ENCODE measurements at regions of chr9 and their contacts with region 1.

Region 1: GRCh38 chr9:135971892-135972291 is 10.7 kb upstream of the UBAC1 start:
- DNase-seq: no peak
- H3K4me3 ChIP-seq: no peak overlapping the region
- H3K27me3 ChIP-seq: peaks cover 3% of the 10 kb centered on the region; the same call in 1 of the 2 replicates
- CTCF ChIP-seq: no peak

Region 2: DNA sequence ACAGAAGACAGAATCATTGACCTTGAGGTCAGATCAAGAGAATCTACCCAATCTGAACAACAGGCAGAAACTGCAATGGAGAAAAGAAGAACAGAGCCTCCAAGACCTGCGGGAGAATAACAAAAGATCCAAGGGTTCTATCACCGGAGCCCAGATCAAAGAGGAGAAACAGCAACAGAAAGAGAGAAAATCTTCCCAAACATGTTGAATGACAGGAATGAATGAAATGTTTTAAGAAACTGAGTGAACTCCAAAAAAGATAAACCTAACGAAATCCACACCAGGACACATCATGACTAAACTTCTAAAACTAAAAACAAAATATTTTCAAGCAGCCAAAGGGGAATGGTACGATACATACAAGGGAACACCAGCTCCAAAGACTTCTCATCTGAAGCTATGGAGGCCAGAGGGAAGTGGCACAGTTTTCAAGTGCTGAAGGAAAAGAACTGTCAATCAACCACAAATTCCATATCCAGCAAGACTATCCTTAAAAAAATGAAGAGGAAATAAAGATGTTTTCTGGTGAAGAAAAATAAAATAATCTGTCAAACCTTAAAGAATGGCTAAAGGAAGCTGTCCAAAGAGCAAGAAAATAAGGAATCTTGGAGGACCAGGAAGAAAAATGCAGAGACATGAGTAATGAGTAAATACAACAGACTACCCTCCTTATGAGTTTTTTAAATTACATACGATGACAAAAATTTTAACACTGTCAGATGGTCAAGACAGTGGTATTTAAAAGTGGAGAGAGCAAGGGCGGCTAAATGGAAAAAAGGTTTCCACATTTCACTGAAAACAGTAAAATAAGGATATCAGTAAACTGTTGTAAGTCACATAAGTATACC is 76.7 kb before region 1 on chr9:
- CTCF ChIA-PET with region 1: no interaction called
- POLR2A ChIA-PET with region 1: no interaction called
- DNase-seq: no peak
- H3K4me3 ChIP-seq: no peak overlapping the region
- H3K27me3 ChIP-seq: no peaks in the 10 kb centered on the region
- CTCF ChIP-seq: no peak

Region 3: GRCh38 chr9:135992486-135993408 is 20.9 kb after region 1 on chr9:
- CTCF ChIA-PET with region 1: interaction called, 17 read pairs
- POLR2A ChIA-PET with region 1: no interaction called
- DNase-seq: peak; percentile 19
- H3K4me3 ChIP-seq: peak overlapping the region; percentile 18
- H3K27me3 ChIP-seq: peaks cover 3% of the 10 kb centered on the region; the same call in 1 of the 2 replicates
- CTCF ChIP-seq: 0 out of 2 replicates have a peak, but pooled peaks have one; percentile 9

Region 4: DNA sequence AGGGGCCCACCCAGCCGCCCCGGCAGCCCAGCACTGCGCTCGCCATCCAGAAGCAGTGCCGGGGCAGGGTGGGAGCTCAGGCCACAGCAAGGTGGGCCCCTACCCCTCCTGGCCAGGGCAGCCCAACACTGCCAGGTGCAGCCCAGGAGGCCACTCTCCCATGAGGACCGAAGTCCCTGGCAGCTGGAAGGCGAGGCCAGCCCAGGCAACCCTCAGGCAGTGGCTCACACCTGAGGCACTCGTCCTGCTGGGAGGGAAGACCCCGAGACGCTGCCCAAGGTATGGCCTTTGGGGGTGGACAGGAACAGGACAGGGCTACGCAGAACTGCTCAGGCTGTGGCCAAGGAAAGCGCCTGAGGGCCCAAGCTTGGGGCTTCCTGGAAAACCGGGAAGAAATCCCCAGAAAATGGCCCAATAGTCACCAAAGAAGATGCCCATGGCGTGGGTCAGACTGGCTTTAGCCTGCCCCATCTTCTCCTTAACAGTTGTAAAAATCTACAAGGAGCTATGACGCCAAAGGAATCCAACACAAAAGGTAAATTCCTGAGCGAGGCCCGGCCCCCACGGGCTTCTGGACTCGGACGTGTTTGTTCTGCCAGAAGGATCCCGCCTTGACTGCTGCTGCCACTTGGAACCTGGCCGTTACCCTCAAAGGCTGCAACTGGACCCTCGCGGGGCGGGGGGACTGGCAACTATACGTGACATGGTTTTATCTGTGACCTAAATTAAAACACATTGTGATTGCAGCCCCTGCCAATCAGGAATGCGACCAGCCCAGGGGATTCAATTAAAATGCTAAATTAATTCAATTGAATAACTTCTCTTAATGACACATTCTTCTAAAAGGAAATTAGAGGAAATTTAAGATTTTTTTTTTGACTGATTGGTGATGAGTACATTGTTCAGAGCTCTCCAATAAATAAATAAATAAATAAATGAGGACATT is 43.7 kb after region 1 on chr9:
- CTCF ChIA-PET with region 1: no interaction called
- POLR2A ChIA-PET with region 1: no interaction called
- DNase-seq: no peak
- H3K4me3 ChIP-seq: no peak overlapping the region
- H3K27me3 ChIP-seq: no peaks in the 10 kb centered on the region
- CTCF ChIP-seq: no peak

Region 5: DNA sequence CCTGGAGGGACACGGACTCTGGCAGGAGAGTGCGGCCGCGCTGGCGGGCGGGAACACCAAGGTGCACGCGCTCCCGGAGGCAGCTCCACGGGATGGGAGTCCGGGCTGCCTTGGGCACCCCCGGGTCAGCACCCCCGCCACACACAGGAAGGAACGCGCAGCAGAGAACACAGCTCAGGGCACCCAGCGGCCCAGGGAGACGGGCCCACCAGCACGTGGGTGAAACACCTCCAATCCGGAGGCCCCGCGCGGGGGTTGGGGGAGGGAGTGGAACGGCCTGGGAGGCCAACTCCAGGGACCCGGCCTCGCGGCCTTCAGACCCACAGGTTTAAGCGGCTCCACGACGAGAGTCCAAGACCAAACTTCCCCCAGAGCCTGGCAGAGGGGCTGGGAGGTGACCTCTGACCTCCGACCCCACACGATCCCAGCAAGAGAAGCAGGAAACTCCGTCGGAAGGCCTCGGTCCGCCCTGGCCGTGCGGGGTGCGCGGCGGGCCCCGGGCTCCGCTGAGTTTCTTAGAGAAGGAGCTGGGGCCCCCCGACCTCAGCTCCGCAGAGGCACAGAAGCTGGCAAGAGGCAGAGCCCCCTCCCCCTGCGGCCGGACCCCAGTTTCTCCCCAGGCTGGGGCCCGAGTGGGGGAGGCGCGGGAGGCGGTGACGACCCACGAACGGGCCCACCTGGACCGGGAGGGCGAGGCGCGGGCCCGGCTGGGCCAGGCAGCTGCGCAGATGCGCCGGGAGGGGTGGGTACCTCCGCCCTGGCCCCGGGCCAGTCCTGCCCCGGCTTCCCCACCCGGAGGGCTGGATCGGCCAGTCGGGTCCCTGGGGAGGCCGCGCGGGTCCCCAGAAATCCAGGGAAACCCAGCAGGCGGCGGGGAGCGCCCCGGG is 122.3 kb after region 1 on chr9:
- CTCF ChIA-PET with region 1: interaction called, 29 read pairs
- POLR2A ChIA-PET with region 1: no interaction called
- DNase-seq: no peak
- H3K4me3 ChIP-seq: peak overlapping the region; percentile 68
- H3K27me3 ChIP-seq: no peaks in the 10 kb centered on the region
- CTCF ChIP-seq: no peak

Region 6: DNA sequence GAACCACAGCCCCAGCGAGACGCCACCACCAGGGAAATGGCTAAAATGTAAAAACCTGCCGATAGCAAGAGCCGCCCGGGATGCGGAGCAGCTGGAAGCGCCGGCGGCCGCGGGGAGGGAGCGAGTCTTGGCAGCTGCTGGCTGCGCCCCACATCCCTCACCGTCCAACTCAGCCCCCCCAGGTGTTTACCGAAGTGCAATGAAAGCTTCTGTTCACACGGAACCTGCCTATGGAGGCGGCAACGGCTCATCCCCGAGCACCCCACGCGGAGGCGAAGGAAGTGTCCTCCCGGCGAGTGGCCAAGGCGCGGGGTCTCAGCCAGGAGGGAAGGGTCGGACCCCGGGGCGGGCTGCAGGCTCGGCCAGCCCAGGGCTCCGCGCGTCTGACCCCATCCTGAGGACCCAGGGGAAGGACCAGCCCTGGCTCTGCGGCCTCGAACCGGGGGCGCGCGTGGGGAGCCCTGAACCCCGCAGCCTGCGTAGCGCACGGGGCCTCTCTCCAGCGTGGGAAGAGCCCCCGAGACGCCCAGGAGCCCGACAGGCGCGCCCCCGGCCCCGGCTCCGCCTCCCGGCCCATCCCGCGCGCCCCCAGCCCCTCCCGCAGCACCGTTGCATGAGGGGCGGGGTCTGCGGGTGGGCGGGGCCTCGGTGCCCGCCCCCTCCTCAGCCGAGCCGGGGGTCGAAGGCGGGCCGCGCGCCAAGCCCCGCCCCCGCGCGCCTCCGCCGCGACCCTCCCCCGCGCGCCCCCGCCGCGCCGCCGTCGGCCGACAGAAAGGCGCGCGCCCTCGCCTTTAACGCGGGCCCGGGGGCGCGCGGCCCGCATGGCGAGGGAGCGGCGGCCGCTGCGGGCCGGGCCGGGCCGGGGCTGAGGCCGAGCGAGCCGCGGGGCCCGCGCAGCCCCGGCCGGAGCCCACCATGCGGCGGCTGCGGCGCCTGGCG is 740.1 kb after region 1 on chr9 and contains the start of gene DIPK1B:
- CTCF ChIA-PET with region 1: no interaction called
- POLR2A ChIA-PET with region 1: no interaction called
- DNase-seq: no peak
- H3K4me3 ChIP-seq: no peak within 1 kb of the TSS
- H3K27me3 ChIP-seq: peaks cover 6% of the 10 kb centered on the region; the same call in 1 of the 2 replicates
- CTCF ChIP-seq: no peak
- polyA plus RNA-seq, gene DIPK1B: 0.17 and 0.42 TPM in 2 replicates

Measured in BJ (cell line).